GM10248 (cell line): ENCODE measurements at regions of chr7 and their contacts with region 1.

Region 1: GRCh38 chr7:45663167-45663921 is 89.2 kb downstream of the ADCY1 start:
- DNase-seq: peak; percentile 52
- CTCF ChIP-seq: peak; percentile 71

Region 2: DNA sequence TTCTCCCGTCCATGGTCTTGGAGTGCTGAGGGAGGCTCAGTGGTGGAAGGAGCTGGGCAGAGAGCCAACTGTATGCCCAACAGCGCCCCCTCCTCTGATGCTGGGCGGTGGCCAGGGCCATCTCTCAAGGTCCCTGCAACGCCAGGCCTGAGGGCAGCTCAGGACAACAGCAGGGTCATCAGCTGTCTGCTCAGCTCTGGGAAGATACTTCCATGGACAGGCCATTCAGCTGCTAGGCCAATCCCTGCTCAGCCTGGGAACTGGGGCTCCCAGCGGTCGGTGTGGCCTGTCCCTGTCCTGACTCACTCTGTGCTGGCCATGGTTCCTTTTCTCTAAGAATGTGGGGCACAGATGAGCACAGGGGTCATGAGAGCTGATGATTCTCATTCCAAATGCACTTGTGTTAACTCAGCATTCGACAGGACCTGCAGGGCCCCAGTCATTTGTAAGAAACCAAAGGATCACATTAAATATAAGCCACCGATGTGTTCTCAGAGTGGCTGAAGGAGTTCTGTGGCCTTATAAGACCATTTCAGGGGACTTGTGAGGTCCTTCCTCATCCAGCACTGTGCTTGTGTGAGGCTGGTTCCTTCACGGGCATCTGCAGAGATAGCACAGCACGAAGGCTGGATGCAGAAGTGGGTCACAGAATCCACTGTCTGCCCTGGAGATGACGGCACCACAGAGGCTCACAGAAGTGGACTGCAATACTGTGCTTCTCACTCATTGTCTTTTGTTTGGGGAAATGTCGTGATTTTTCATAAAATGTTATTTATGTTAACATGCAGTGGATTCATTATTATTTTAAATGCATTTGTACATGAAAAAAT is 16.1 kb before region 1 on chr7:
- CTCF ChIA-PET with region 1: interaction called, 12 read pairs
- POLR2A ChIA-PET with region 1: no interaction called
- DNase-seq: no peak
- CTCF ChIP-seq: no peak

Region 3: GRCh38 chr7:45679516-45679915 is 16.2 kb after region 1 on chr7:
- CTCF ChIA-PET with region 1: interaction called, 10 read pairs
- POLR2A ChIA-PET with region 1: no interaction called
- DNase-seq: no peak
- CTCF ChIP-seq: no peak

Region 4: GRCh38 chr7:45709168-45710042 is 46.1 kb after region 1 on chr7:
- CTCF ChIA-PET with region 1: interaction called, 11 read pairs
- POLR2A ChIA-PET with region 1: no interaction called
- DNase-seq: no peak
- CTCF ChIP-seq: no peak